B cell (primary cell): ENCODE measurements at regions of chr12 and their contacts with region 1.

Region 1: GRCh38 chr12:76455582-76456345 is 103.8 kb downstream of the OSBPL8 start:
- DNase-seq: peak; percentile 50
- ATAC-seq: peak; percentile 41
- H3K4me3 ChIP-seq: no peak overlapping the region
- H3K4me3 Mint-ChIP-seq: no peak overlapping the region
- H3K27ac ChIP-seq: no peak overlapping the region
- H3K27ac Mint-ChIP-seq: no peak overlapping the region
- H3K4me1 ChIP-seq: peaks cover 0 to 4% of the 10 kb centered on the region in 2 donors
- H3K4me1 Mint-ChIP-seq: peaks cover 13% of the 10 kb centered on the region
- H3K27me3 ChIP-seq: no peaks in the 10 kb centered on the region
- H3K27me3 Mint-ChIP-seq: no peaks in the 10 kb centered on the region
- CTCF ChIP-seq: peak; percentile 70

Region 2: GRCh38 chr12:76037130-76038103 is 418.3 kb before region 1 on chr12:
- CTCF ChIA-PET with region 1: interaction called, 3 read pairs
- POLR2A ChIA-PET with region 1: no interaction called
- intact Hi-C with region 1: loop called (anchors 1 kb)
- DNase-seq: peak; percentile 76
- ATAC-seq: peak; percentile 71
- H3K4me3 ChIP-seq: no peak overlapping the region
- H3K4me3 Mint-ChIP-seq: no peak overlapping the region
- H3K27ac ChIP-seq: no peak overlapping the region
- H3K27ac Mint-ChIP-seq: no peak overlapping the region
- H3K4me1 ChIP-seq: peaks cover 3 to 4% of the 10 kb centered on the region in 2 donors
- H3K4me1 Mint-ChIP-seq: peaks cover 9% of the 10 kb centered on the region
- H3K27me3 ChIP-seq: no peaks in the 10 kb centered on the region
- H3K27me3 Mint-ChIP-seq: no peaks in the 10 kb centered on the region
- CTCF ChIP-seq: peak; percentile 85

Region 3: GRCh38 chr12:76250256-76250655 is 205.5 kb before region 1 on chr12:
- CTCF ChIA-PET with region 1: no interaction called
- POLR2A ChIA-PET with region 1: no interaction called
- intact Hi-C with region 1: no loop called
- DNase-seq: no peak
- ATAC-seq: no peak
- H3K4me3 ChIP-seq: no peak overlapping the region
- H3K4me3 Mint-ChIP-seq: no peak overlapping the region
- H3K27ac ChIP-seq: no peak overlapping the region
- H3K27ac Mint-ChIP-seq: no peak overlapping the region
- H3K4me1 ChIP-seq: no peaks in the 10 kb centered on the region
- H3K4me1 Mint-ChIP-seq: no peaks in the 10 kb centered on the region
- H3K27me3 ChIP-seq: peaks cover 0 to 2% (median 0%) of the 10 kb centered on the region in 4 experiments
- H3K27me3 Mint-ChIP-seq: peaks cover 10% of the 10 kb centered on the region
- CTCF ChIP-seq: no peak

Region 4: GRCh38 chr12:76277480-76277879 is 178.3 kb before region 1 on chr12:
- CTCF ChIA-PET with region 1: no interaction called
- POLR2A ChIA-PET with region 1: no interaction called
- intact Hi-C with region 1: no loop called
- DNase-seq: no peak
- ATAC-seq: no peak
- H3K4me3 ChIP-seq: no peak overlapping the region
- H3K4me3 Mint-ChIP-seq: no peak overlapping the region
- H3K27ac ChIP-seq: no peak overlapping the region
- H3K27ac Mint-ChIP-seq: no peak overlapping the region
- H3K4me1 ChIP-seq: no peaks in the 10 kb centered on the region
- H3K4me1 Mint-ChIP-seq: no peaks in the 10 kb centered on the region
- H3K27me3 ChIP-seq: peaks cover 0 to 4% (median 0%) of the 10 kb centered on the region in 4 experiments
- H3K27me3 Mint-ChIP-seq: peaks cover 20% of the 10 kb centered on the region
- CTCF ChIP-seq: no peak

Region 5: DNA sequence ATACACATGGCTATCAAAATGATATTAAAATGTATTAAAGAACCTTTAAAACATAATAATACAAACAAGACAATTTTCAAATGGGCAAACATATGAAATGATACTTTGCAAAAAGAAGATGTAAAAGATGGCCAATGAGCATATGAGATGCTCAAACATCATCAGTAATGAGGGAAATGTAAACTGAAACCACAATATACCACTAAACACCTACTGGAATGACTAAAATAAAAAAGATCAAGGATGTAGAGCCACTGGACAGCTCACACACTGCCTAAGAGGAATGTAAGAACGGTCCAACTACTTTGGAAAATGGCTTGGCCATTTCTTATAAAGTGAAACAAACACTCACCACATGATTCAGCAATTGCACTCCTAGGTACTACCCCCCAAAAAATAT is 10.3 kb before region 1 on chr12:
- CTCF ChIA-PET with region 1: interaction called, 11 read pairs
- POLR2A ChIA-PET with region 1: no interaction called
- intact Hi-C with region 1: no loop called
- DNase-seq: no peak
- ATAC-seq: no peak
- H3K4me3 ChIP-seq: no peak overlapping the region
- H3K4me3 Mint-ChIP-seq: no peak overlapping the region
- H3K27ac ChIP-seq: no peak overlapping the region
- H3K27ac Mint-ChIP-seq: no peak overlapping the region
- H3K4me1 ChIP-seq: peaks cover 0 to 12% of the 10 kb centered on the region in 2 donors
- H3K4me1 Mint-ChIP-seq: peaks cover 33% of the 10 kb centered on the region
- H3K27me3 ChIP-seq: no peaks in the 10 kb centered on the region
- H3K27me3 Mint-ChIP-seq: no peaks in the 10 kb centered on the region
- CTCF ChIP-seq: no peak

Region 6: DNA sequence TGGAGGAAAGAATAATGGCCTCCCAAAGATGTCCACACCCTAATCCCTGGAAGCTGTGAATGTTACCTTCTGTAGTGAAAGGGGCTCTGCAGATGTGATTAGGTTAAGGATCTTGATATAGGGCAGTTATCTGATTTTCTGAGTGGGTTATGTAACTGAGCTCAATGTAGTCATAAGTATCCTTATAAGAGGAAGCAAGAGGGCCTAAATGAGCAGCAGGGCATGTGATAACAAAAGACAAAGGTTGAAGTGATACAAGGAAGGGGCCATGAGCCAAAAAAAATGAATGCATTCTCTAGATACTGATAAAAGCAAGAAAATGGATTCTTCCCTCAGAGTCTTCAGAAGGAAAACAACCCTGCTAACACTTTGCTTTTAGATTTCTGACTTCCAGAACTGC is 25.0 kb after region 1 on chr12:
- CTCF ChIA-PET with region 1: no interaction called
- POLR2A ChIA-PET with region 1: no interaction called
- intact Hi-C with region 1: no loop called
- DNase-seq: no peak
- ATAC-seq: no peak
- H3K4me3 ChIP-seq: no peak overlapping the region
- H3K4me3 Mint-ChIP-seq: no peak overlapping the region
- H3K27ac ChIP-seq: no peak overlapping the region
- H3K27ac Mint-ChIP-seq: no peak overlapping the region
- H3K4me1 ChIP-seq: no peaks in the 10 kb centered on the region
- H3K4me1 Mint-ChIP-seq: peaks cover 6% of the 10 kb centered on the region
- H3K27me3 ChIP-seq: no peaks in the 10 kb centered on the region
- H3K27me3 Mint-ChIP-seq: no peaks in the 10 kb centered on the region
- CTCF ChIP-seq: no peak

Region 7: DNA sequence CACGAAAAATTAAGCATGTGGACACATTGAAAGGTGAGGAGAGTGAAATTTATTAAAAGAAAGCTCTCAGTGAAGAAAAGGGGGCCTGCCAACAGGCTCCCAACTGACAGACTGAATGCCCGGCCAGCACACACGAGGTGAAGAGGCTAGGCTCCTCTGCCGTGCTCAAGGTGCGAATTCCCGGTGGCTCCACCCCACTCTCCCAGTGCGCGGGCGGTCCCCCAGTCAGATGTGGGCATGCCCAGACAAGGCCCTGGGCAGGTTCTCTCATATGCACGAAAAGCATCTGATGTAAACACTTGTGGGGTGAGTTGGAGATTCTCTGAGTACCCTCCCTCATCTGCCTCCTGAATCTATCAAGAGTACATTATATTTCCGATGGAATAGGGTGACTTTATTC is 152.3 kb after region 1 on chr12:
- CTCF ChIA-PET with region 1: no interaction called
- POLR2A ChIA-PET with region 1: no interaction called
- intact Hi-C with region 1: no loop called
- DNase-seq: no peak
- ATAC-seq: no peak
- H3K4me3 ChIP-seq: no peak overlapping the region
- H3K4me3 Mint-ChIP-seq: no peak overlapping the region
- H3K27ac ChIP-seq: no peak overlapping the region
- H3K27ac Mint-ChIP-seq: no peak overlapping the region
- H3K4me1 ChIP-seq: no peaks in the 10 kb centered on the region
- H3K4me1 Mint-ChIP-seq: no peaks in the 10 kb centered on the region
- H3K27me3 ChIP-seq: no peaks in the 10 kb centered on the region
- H3K27me3 Mint-ChIP-seq: peaks cover 4% of the 10 kb centered on the region
- CTCF ChIP-seq: no peak